Endothelial cell of umbilical vein (primary cell): ENCODE measurements at regions of chr1 and their contacts with region 1.

Region 1: GRCh38 chr1:7902478-7903085 is 38.1 kb downstream of the TNFRSF9 start:
- DNase-seq: peak; percentile 58
- H3K4me3 ChIP-seq: no peak overlapping the region
- H3K27ac ChIP-seq: no peak overlapping the region
- H3K4me1 ChIP-seq: no peaks in the 10 kb centered on the region
- H3K27me3 ChIP-seq: peaks cover 0 to 3% of the 10 kb centered on the region in 2 experiments
- CTCF ChIP-seq: peak; percentile 59 to 80
- POLR2A ChIP-seq: no peak

Region 2: DNA sequence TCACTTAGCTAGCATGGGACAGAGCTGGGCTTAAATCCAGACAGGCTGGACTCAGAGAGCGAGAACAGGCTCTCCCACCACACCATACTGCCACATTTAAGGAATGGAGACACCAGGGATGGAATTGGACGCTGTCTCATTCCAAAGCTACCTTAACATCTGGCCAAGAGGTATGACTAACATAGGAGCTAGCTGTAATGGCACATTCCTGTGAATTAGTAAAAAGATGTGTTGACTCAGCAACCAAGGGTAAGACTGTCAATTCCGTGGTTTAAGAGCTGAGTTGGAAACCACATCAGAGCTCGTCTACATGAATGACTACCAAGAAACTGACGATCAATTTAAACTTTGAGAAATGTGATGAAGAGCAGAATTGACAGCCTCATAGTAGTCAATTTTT is 46.4 kb after region 1 on chr1:
- CTCF ChIA-PET with region 1: no interaction called
- POLR2A ChIA-PET with region 1: no interaction called
- dilution Hi-C with region 1: no loop called
- intact Hi-C with region 1: loop called (anchors 1 kb)
- DNase-seq: no peak
- H3K4me3 ChIP-seq: no peak overlapping the region
- H3K27ac ChIP-seq: no peak overlapping the region
- H3K4me1 ChIP-seq: peaks cover 8% of the 10 kb centered on the region
- H3K27me3 ChIP-seq: no peaks in the 10 kb centered on the region
- CTCF ChIP-seq: no peak
- POLR2A ChIP-seq: no peak

Region 3: GRCh38 chr1:7953850-7954609 is 51.4 kb after region 1 on chr1:
- CTCF ChIA-PET with region 1: no interaction called
- POLR2A ChIA-PET with region 1: no interaction called
- dilution Hi-C with region 1: no loop called
- intact Hi-C with region 1: loop called (anchors 1 kb)
- DNase-seq: peak; percentile 83
- H3K4me3 ChIP-seq: peak overlapping the region; percentile 43 to 63 (median 56)
- H3K27ac ChIP-seq: peak overlapping the region; percentile 74
- H3K4me1 ChIP-seq: peaks cover 8% of the 10 kb centered on the region
- H3K27me3 ChIP-seq: no peaks in the 10 kb centered on the region
- CTCF ChIP-seq: no peak
- POLR2A ChIP-seq: peak; percentile 77